ENCODE measurements at regions of chr20 and their contacts with region 1.

Region 1: GRCh38 chr20:34033903-34034302 is 40.2 kb downstream of the RALY start:
- DNase-seq: no peak

Region 2: GRCh38 chr20:33947709-33948295 is 86.1 kb before region 1 on chr20:
- in situ Hi-C with region 1: loop called (anchors 5 kb)
- DNase-seq: peak; percentile 34

Region 3: DNA sequence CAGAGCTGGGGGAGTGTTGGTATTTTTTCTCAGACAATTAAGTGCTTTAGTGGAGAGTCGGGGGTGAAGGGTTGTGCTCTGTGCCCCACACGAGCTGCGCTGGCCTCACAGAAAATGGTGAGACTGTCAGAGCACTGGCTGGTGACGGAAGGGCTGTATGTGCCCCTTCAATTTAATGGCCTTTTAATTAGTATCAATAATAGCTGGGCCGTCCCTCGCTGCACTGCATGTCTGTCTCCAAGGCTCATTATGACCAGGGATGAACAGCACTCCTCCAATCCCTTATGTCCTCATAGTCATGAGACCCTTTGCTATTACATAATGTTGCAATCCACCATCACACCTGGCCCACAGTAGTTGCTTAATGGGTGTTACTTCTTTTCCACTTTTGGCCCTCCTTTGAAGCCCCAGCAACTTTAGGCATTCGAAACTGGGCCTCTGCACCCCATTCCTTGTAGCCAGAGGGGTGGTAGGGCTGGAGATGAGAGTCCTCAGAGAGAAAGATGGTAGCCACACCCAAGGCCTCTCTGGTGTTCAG is 49.7 kb before region 1 on chr20:
- in situ Hi-C with region 1: no loop called
- DNase-seq: no peak

Region 4: DNA sequence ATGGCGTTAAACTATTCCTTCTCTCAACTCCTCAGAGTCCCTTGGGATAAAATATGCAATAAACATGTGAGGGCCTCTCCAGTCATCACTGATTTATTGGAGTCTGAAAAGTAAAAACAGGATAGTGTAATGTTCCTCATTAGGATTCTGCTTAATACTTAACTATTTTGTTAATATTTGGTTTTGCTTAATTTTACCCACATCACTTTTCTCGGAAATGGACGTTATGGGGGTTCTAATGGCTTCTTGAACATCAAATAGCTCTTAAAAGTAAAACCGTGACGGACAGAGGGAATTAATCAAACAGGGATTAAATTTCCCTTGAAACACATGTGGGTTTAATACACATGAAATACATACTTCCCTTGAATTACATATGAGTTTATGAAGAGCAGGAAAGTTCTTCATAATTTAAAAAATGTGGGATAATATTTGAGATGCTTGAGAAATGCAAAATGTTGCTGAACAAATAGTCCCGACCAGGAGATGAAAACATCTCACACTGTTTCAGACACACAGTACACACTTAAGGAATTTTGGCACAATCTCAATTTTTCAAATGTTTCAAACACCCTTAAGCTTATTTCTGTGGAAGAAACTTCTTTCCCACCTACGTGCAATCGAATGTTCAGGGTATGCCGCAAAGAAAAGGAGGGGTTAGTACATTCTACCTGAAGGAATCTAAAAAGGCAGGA is 116.5 kb after region 1 on chr20:
- in situ Hi-C with region 1: no loop called
- DNase-seq: no peak

Measured in G401 (cell line).